ENCODE measurements at regions of chr5 and their contacts with region 1.

Region 1: DNA sequence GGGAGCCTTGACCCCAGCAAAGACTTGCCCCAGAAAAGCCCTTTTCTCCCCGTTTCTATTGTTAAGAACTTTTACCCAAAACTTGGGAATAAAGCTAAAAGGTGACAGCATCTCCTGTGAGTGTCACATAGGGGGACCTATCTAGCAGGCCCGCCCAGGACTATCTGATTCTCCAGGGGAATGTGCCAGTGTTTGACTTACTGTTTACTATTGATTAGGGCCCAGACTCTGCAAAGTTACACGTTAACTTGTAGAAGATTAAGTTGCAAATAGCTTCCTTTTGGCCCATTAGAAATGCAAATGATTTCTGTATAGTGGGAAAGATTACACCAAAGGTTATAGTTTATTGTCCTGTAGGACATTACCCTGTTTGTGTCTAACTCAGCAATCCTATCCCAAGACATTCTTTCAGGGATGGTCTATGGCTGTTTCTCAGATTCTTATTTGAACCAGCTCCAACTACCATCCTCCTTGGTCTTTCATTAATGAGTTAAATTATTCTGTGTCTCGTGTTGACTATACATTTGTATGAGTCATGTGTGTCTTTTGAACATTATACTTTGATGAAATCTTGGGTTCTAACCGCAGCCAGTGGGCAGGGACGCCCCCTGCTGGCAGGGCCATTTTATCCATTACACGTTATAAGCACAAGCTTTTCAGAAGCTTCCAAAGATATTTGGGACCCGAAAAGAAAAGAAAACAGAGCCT is 60.7 kb downstream of the HRH2 start:
- DNase-seq: peak; percentile 51 to 74
- H3K4me3 ChIP-seq: no peak overlapping the region
- H3K4me3 Mint-ChIP-seq: no peak overlapping the region
- H3K27ac Mint-ChIP-seq: peak overlapping the region; percentile 24
- H3K4me1 ChIP-seq: peaks cover 9% of the 10 kb centered on the region; the same call in 1 of the 2 replicates
- H3K4me1 Mint-ChIP-seq: peaks cover 11% of the 10 kb centered on the region
- H3K27me3 ChIP-seq: no peaks in the 10 kb centered on the region
- H3K27me3 Mint-ChIP-seq: no peaks in the 10 kb centered on the region
- CTCF ChIP-seq: peak; percentile 88 to 93

Region 2: GRCh38 chr5:175617447-175617846 is 101.1 kb before region 1 on chr5:
- CTCF ChIA-PET with region 1: no interaction called
- POLR2A ChIA-PET with region 1: no interaction called
- intact Hi-C with region 1: loop called (anchors 2 kb)
- DNase-seq: peak in 1 of 2 experiments; percentile 29
- H3K4me3 ChIP-seq: no peak overlapping the region
- H3K4me3 Mint-ChIP-seq: no peak overlapping the region
- H3K27ac Mint-ChIP-seq: no peak overlapping the region
- H3K4me1 ChIP-seq: no peaks in the 10 kb centered on the region
- H3K4me1 Mint-ChIP-seq: no peaks in the 10 kb centered on the region
- H3K27me3 ChIP-seq: no peaks in the 10 kb centered on the region; the same call in 1 of the 2 replicates
- H3K27me3 Mint-ChIP-seq: peaks cover 9% of the 10 kb centered on the region
- CTCF ChIP-seq: peak in 1 of 2 experiments; percentile 52

Region 3: DNA sequence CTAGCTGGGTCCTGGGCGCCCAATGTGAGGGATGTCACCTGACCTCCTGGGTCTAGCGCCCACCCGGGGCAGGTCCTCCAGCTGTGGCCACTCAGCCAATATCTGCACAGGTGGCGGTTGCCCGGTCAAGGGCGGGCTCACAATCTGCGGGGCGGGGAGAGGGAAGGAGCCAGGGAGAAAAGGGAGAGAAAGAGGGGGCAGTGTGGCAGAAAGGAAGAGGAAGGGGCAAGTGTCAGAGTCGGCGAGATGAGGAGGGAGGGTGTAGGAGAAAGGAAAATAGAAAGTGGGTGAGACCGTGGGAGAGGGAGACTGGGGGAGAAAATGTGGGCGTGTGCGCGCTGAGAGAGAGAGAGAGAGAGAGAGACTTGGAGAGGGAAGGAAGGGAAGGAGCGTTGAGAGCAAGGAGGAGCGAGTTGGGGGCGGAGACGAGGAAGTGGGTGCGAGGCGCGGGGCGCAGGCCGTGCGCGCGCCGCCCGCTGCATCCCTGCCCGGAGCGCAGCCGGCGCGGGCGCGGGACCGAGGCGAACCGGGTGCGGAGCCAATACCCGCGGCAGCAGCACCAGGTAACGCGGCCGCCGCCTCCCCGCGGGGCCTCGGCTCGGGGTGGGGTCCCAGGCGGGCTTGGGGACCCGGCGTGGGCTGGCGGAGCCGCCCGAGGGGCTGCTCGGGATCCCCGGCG is 60.8 kb before region 1 on chr5 and contains the start of gene HRH2:
- CTCF ChIA-PET with region 1: no interaction called
- POLR2A ChIA-PET with region 1: no interaction called
- intact Hi-C with region 1: no loop called
- DNase-seq: no peak
- H3K4me3 ChIP-seq: no peak within 1 kb of the TSS
- H3K4me3 Mint-ChIP-seq: no peak within 1 kb of the TSS
- H3K27ac Mint-ChIP-seq: no peak within 1 kb of the TSS
- H3K4me1 ChIP-seq: peaks cover 6% of the 10 kb centered on the region; the same call in 1 of the 2 replicates
- H3K4me1 Mint-ChIP-seq: no peaks in the 10 kb centered on the region
- H3K27me3 ChIP-seq: no peaks in the 10 kb centered on the region
- H3K27me3 Mint-ChIP-seq: no peaks in the 10 kb centered on the region
- CTCF ChIP-seq: no peak
- total RNA-seq, gene HRH2: not detected in 2 replicates

Region 4: GRCh38 chr5:175706499-175706898 is 12.1 kb before region 1 on chr5:
- CTCF ChIA-PET with region 1: interaction called, 22 read pairs
- POLR2A ChIA-PET with region 1: interaction called, 7 read pairs
- intact Hi-C with region 1: no loop called
- DNase-seq: peak; percentile 84 to 88
- H3K4me3 ChIP-seq: no peak overlapping the region
- H3K4me3 Mint-ChIP-seq: no peak overlapping the region
- H3K27ac Mint-ChIP-seq: peak overlapping the region; percentile 63
- H3K4me1 ChIP-seq: peaks cover 15% of the 10 kb centered on the region
- H3K4me1 Mint-ChIP-seq: peaks cover 26% of the 10 kb centered on the region
- H3K27me3 ChIP-seq: no peaks in the 10 kb centered on the region
- H3K27me3 Mint-ChIP-seq: peaks cover 4% of the 10 kb centered on the region
- CTCF ChIP-seq: no peak

Measured in Caco-2 (cell line).